Naive thymus-derived CD4-positive, alpha-beta T cell (primary cell): ENCODE measurements at regions of chr15 and their contacts with region 1.

Region 1: DNA sequence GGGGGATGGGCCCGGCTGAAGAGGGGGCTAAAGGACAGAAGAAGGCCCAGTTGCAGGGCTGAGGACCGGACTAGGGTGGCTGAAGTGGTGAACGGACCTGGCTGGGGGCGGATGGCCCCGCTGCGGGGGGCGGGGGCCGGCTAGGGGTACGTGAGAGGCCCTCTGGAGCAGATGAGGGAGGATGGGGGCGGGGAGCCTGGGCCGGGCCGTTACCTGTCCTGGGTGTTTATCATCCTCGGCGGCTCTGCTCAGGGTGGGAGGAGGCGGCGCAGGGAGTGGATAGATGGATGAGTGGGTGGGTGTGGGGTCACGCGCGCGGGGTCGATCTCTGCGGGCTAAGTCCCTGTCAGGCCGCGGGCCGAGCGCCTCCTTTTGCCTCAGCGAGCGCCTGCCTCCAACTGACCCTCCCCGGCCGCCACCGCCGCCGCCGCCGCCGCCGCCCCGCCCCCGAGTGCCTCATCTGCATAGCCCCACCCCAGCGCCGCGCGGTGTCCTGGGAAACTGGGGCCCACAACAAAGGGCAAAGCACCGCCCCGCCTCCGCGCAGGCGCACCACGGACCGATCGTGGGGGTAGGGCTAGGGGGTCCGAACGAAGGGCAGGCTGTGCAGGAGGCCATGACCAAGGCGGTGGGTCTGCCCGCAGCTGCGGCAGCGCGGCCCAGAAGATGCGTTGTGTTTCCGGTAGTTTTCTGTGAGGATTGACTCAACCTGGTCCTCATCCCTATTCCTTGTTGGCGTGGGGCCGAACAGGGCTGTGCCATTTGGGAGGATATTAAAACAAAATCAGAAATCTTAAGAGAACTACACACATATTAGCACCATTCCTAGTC is 72.4 kb downstream of the RBPMS2 start:
- DNase-seq: peak; percentile 87 to 98 (median 92)
- ATAC-seq: peak; percentile 98
- H3K4me3 ChIP-seq: peak overlapping the region; percentile 93
- H3K4me3 Mint-ChIP-seq: peak overlapping the region; percentile 78 to 97 (median 84)
- H3K27ac ChIP-seq: peak overlapping the region; percentile 80
- H3K27ac Mint-ChIP-seq: peak overlapping the region; percentile 67 to 95 (median 91)
- H3K4me1 ChIP-seq: peaks cover 40 to 43% of the 10 kb centered on the region in 2 donors
- H3K4me1 Mint-ChIP-seq: peaks cover 46 to 57% (median 52%) of the 10 kb centered on the region in 7 donors
- H3K27me3 ChIP-seq: no peaks in the 10 kb centered on the region
- H3K27me3 Mint-ChIP-seq: no peaks in the 10 kb centered on the region

Region 2: GRCh38 chr15:63950911-63951481 is 752.0 kb before region 1 on chr15:
- CTCF ChIA-PET with region 1: no interaction called
- POLR2A ChIA-PET with region 1: no interaction called
- intact Hi-C with region 1: no loop called
- DNase-seq: no peak
- ATAC-seq: no peak
- H3K4me3 ChIP-seq: no peak overlapping the region
- H3K4me3 Mint-ChIP-seq: no peak overlapping the region
- H3K27ac ChIP-seq: no peak overlapping the region
- H3K27ac Mint-ChIP-seq: peak overlapping the region in 1 of 9 donors; percentile 31
- H3K4me1 ChIP-seq: no peaks in the 10 kb centered on the region
- H3K4me1 Mint-ChIP-seq: peaks cover 4 to 13% (median 9%) of the 10 kb centered on the region in 7 donors
- H3K27me3 ChIP-seq: no peaks in the 10 kb centered on the region
- H3K27me3 Mint-ChIP-seq: peaks cover 0 to 25% (median 0%) of the 10 kb centered on the region in 5 donors

Region 3: GRCh38 chr15:64460206-64460734 is 242.8 kb before region 1 on chr15 and contains the start of gene ZNF609:
- CTCF ChIA-PET with region 1: no interaction called
- POLR2A ChIA-PET with region 1: no interaction called
- intact Hi-C with region 1: loop called in 1 of 2 experiments (anchors 2 kb)
- DNase-seq: peak; percentile 75 to 97 (median 85)
- ATAC-seq: peak; percentile 89
- H3K4me3 ChIP-seq: peak within 1 kb of the TSS; percentile 88
- H3K4me3 Mint-ChIP-seq: peak within 1 kb of the TSS; percentile 90 to 98 (median 94)
- H3K27ac ChIP-seq: peak within 1 kb of the TSS; percentile 70
- H3K27ac Mint-ChIP-seq: peak within 1 kb of the TSS; percentile 89 to 97 (median 92)
- H3K4me1 ChIP-seq: peaks cover 22 to 69% of the 10 kb centered on the region in 2 donors
- H3K4me1 Mint-ChIP-seq: peaks cover 61 to 91% (median 88%) of the 10 kb centered on the region in 7 donors
- H3K27me3 ChIP-seq: no peaks in the 10 kb centered on the region
- H3K27me3 Mint-ChIP-seq: no peaks in the 10 kb centered on the region
- total RNA-seq, gene ZNF609: 55.0 to 89.1 (median 78.3) TPM

Region 4: GRCh38 chr15:64552281-64552948 is 150.6 kb before region 1 on chr15:
- CTCF ChIA-PET with region 1: no interaction called
- POLR2A ChIA-PET with region 1: no interaction called
- intact Hi-C with region 1: no loop called
- DNase-seq: no peak
- ATAC-seq: no peak
- H3K4me3 ChIP-seq: no peak overlapping the region
- H3K4me3 Mint-ChIP-seq: peak overlapping the region in 3 of 10 donors; percentile 17 to 49 (median 29)
- H3K27ac ChIP-seq: no peak overlapping the region
- H3K27ac Mint-ChIP-seq: peak overlapping the region in 4 of 9 donors; percentile 12 to 62 (median 32)
- H3K4me1 ChIP-seq: peaks cover 0 to 15% of the 10 kb centered on the region in 2 donors
- H3K4me1 Mint-ChIP-seq: peaks cover 13 to 76% (median 67%) of the 10 kb centered on the region in 7 donors
- H3K27me3 ChIP-seq: no peaks in the 10 kb centered on the region
- H3K27me3 Mint-ChIP-seq: no peaks in the 10 kb centered on the region

Region 5: GRCh38 chr15:64825431-64826294 is 122.6 kb after region 1 on chr15 and contains the start of gene PIF1:
- CTCF ChIA-PET with region 1: no interaction called
- POLR2A ChIA-PET with region 1: no interaction called
- intact Hi-C with region 1: loop called in 1 of 2 experiments (anchors 1 kb)
- DNase-seq: peak; percentile 44 to 92 (median 87)
- ATAC-seq: peak; percentile 99
- H3K4me3 ChIP-seq: peak within 1 kb of the TSS; percentile 71
- H3K4me3 Mint-ChIP-seq: peak within 1 kb of the TSS; percentile 82 to 95 (median 88)
- H3K27ac ChIP-seq: peak within 1 kb of the TSS; percentile 37
- H3K27ac Mint-ChIP-seq: peak within 1 kb of the TSS in 8 of 9 donors; percentile 41 to 91 (median 75)
- H3K4me1 ChIP-seq: peaks cover 21 to 24% of the 10 kb centered on the region in 2 donors
- H3K4me1 Mint-ChIP-seq: peaks cover 25 to 42% (median 35%) of the 10 kb centered on the region in 7 donors
- H3K27me3 ChIP-seq: peaks cover 0 to 4% of the 10 kb centered on the region in 2 donors
- H3K27me3 Mint-ChIP-seq: peaks cover 0 to 19% (median 12%) of the 10 kb centered on the region in 5 donors
- total RNA-seq, gene PIF1: 0.34 to 30.2 (median 1.0) TPM in 3 of 5 experiments, not detected in the others

Region 6: GRCh38 chr15:65292938-65293518 is 590.0 kb after region 1 on chr15:
- CTCF ChIA-PET with region 1: no interaction called
- POLR2A ChIA-PET with region 1: no interaction called
- intact Hi-C with region 1: loop called (anchors 5 to 10 kb)
- DNase-seq: no peak
- ATAC-seq: no peak
- H3K4me3 ChIP-seq: no peak overlapping the region
- H3K4me3 Mint-ChIP-seq: peak overlapping the region in 1 of 10 donors; percentile 12
- H3K27ac ChIP-seq: no peak overlapping the region
- H3K27ac Mint-ChIP-seq: peak overlapping the region in 1 of 9 donors; percentile 62
- H3K4me1 ChIP-seq: peaks cover 12 to 18% of the 10 kb centered on the region in 2 donors
- H3K4me1 Mint-ChIP-seq: peaks cover 12 to 33% (median 21%) of the 10 kb centered on the region in 7 donors
- H3K27me3 ChIP-seq: no peaks in the 10 kb centered on the region
- H3K27me3 Mint-ChIP-seq: peaks cover 0 to 2% (median 0%) of the 10 kb centered on the region in 5 donors